Activated naive CD4-positive, alpha-beta T cell treated with anti-CD3 and anti-CD28 coated beads, Interleukin-2, amount 10 ng/mL, durations not matched to agents 7 days and 5 days (primary cell): ENCODE measurements at regions of chr17 and their contacts with region 1.

Region 1: GRCh38 chr17:16285957-16286640 is 67.2 kb downstream of the CENPV start:
- DNase-seq: peak; percentile 87
- H3K4me3 Mint-ChIP-seq: peak overlapping the region; percentile 66
- H3K27ac Mint-ChIP-seq: peak overlapping the region; percentile 98
- H3K4me1 Mint-ChIP-seq: peaks cover 55% of the 10 kb centered on the region
- H3K27me3 Mint-ChIP-seq: no peaks in the 10 kb centered on the region

Region 2: GRCh38 chr17:16068323-16068722 is 217.8 kb before region 1 on chr17:
- CTCF ChIA-PET with region 1: no interaction called
- DNase-seq: no peak
- H3K4me3 Mint-ChIP-seq: no peak overlapping the region
- H3K27ac Mint-ChIP-seq: no peak overlapping the region
- H3K4me1 Mint-ChIP-seq: no peaks in the 10 kb centered on the region
- H3K27me3 Mint-ChIP-seq: no peaks in the 10 kb centered on the region

Region 3: GRCh38 chr17:16258901-16259300 is 27.2 kb before region 1 on chr17:
- CTCF ChIA-PET with region 1: no interaction called
- DNase-seq: no peak
- H3K4me3 Mint-ChIP-seq: no peak overlapping the region
- H3K27ac Mint-ChIP-seq: no peak overlapping the region
- H3K4me1 Mint-ChIP-seq: peaks cover 11% of the 10 kb centered on the region
- H3K27me3 Mint-ChIP-seq: no peaks in the 10 kb centered on the region

Region 4: GRCh38 chr17:16304830-16305229 is 18.7 kb after region 1 on chr17:
- CTCF ChIA-PET with region 1: interaction called, 11 read pairs
- DNase-seq: peak; percentile 29
- H3K4me3 Mint-ChIP-seq: no peak overlapping the region
- H3K27ac Mint-ChIP-seq: no peak overlapping the region
- H3K4me1 Mint-ChIP-seq: peaks cover under 1% of the 10 kb centered on the region
- H3K27me3 Mint-ChIP-seq: no peaks in the 10 kb centered on the region